Kidney (tissue), 22 donors: ENCODE measurements at regions of chr10 and their contacts with region 1.

Region 1: GRCh38 chr10:114094795-114095194 is 51.1 kb downstream of the ADRB1 start:
- DNase-seq: no peak
- H3K4me3 ChIP-seq: no peak overlapping the region
- H3K27ac ChIP-seq: no peak overlapping the region
- H3K4me1 ChIP-seq: no peaks in the 10 kb centered on the region
- H3K27me3 ChIP-seq: no peaks in the 10 kb centered on the region
- CTCF ChIP-seq: no peak

Region 2: GRCh38 chr10:113802997-113803396 is 291.8 kb before region 1 on chr10:
- intact Hi-C with region 1: loop called (anchors 5 kb)
- DNase-seq: no peak
- H3K4me3 ChIP-seq: no peak overlapping the region
- H3K27ac ChIP-seq: no peak overlapping the region
- H3K4me1 ChIP-seq: no peaks in the 10 kb centered on the region
- H3K27me3 ChIP-seq: no peaks in the 10 kb centered on the region
- CTCF ChIP-seq: no peak